ENCODE measurements at regions of chr7 and their contacts with region 1.

Region 1: GRCh38 chr7:6545398-6546126 is 5.7 kb downstream of the GRID2IP start:
- DNase-seq: no peak
- H3K4me3 ChIP-seq: no peak overlapping the region
- H3K27ac ChIP-seq: no peak overlapping the region
- H3K4me1 ChIP-seq: no peaks in the 10 kb centered on the region
- H3K27me3 ChIP-seq: peaks cover 0 to 3% (median 0%) of the 10 kb centered on the region in 4 experiments; a peak in 2 of 7 replicates
- CTCF ChIP-seq: no peak
- EP300 ChIP-seq: no peak
- POLR2A ChIP-seq: no peak
- RAD21 ChIP-seq: no peak

Region 2: GRCh38 chr7:6530626-6531491 is 14.7 kb before region 1 on chr7:
- CTCF ChIA-PET with region 1: interaction called, 15 read pairs
- POLR2A ChIA-PET with region 1: interaction called, 4 read pairs
- DNase-seq: peak in 1 of 2 experiments; percentile 91
- H3K4me3 ChIP-seq: peak overlapping the region; percentile 57 to 83 (median 74)
- H3K27ac ChIP-seq: no peak overlapping the region
- H3K4me1 ChIP-seq: peaks cover 0 to 14% (median 10%) of the 10 kb centered on the region in 4 experiments; a peak in 4 of 7 replicates
- H3K27me3 ChIP-seq: peaks cover 7 to 72% (median 58%) of the 10 kb centered on the region in 4 experiments
- CTCF ChIP-seq: no peak
- EP300 ChIP-seq: no peak
- POLR2A ChIP-seq: no peak
- RAD21 ChIP-seq: no peak

Region 3: DNA sequence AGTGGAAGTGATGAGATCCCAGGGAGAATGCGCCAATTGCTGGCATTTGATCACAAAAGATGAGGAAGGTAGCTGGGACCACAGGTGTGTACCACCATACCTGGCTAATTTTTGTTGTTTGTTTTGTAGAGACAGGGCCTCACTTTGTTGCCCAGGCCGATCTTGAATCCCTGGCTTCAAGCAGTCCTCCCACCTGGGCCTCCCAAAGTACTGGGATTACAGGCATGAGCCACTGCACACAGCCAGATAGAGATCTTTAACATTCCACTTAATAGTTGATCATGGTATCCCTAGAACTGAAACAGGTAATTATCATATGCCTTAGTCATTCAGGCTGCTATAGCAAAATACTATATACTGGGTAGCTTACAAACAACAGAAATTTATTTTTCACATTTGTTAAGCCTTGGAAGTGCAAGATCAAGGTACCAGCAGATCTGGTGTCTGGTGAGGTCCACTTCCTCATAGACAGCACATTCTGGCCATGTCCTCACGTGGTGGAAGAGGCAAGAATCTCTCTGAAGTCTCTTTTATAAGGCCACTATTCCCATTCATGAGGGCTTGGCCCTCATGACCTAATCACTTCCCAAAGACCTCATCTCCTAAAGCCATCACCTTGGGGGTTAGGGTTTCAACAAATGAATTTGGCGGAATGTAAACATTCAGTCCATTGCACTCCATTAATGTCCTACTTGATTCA is 499.1 kb after region 1 on chr7:
- CTCF ChIA-PET with region 1: no interaction called
- POLR2A ChIA-PET with region 1: no interaction called
- DNase-seq: no peak
- H3K4me3 ChIP-seq: no peak overlapping the region
- H3K27ac ChIP-seq: no peak overlapping the region
- H3K4me1 ChIP-seq: no peaks in the 10 kb centered on the region
- H3K27me3 ChIP-seq: no peaks in the 10 kb centered on the region
- CTCF ChIP-seq: no peak
- EP300 ChIP-seq: no peak
- POLR2A ChIP-seq: no peak
- RAD21 ChIP-seq: no peak

Measured in H1 (cell line).